Left cardiac atrium (tissue), 4 donors: ENCODE measurements at regions of chr9 and their contacts with region 1.

Region 1: DNA sequence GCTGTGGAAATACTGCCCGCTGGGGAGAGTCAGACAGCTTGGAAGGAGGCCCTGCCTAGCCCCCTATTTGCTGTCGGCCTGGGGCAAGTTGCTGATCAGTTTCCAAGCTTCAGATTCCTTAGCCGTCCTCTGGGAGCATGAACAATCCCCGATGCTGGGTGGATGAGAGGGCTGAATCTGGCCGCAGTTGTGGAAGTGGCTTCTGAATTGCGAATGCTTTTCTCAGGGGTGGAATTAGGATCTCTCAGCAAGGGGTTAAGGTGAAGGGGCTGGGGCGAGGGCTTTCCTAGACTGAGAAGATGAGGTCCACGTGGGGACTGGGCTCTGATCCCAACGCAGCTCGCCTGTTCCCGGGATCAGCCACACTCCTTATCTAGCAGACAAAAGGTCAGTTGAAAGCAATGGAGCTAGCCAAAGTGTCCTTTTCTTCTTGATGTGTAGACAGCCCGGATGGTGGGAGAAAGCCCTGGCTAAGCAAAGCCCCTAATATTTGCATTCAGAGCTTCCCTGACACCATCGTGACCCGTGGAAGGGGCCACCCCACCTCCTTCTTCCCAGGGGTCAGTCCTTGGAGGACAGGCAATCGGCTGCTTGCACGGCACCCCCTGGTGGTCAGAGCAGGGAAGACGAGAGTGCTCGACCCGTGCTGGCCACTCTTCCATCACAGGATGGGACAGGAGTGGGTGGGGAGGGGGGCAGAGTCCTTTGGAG is 54.9 kb downstream of the COL15A1 start:
- DNase-seq: peak; percentile 88
- ATAC-seq: peak; percentile 76 to 80

Region 2: DNA sequence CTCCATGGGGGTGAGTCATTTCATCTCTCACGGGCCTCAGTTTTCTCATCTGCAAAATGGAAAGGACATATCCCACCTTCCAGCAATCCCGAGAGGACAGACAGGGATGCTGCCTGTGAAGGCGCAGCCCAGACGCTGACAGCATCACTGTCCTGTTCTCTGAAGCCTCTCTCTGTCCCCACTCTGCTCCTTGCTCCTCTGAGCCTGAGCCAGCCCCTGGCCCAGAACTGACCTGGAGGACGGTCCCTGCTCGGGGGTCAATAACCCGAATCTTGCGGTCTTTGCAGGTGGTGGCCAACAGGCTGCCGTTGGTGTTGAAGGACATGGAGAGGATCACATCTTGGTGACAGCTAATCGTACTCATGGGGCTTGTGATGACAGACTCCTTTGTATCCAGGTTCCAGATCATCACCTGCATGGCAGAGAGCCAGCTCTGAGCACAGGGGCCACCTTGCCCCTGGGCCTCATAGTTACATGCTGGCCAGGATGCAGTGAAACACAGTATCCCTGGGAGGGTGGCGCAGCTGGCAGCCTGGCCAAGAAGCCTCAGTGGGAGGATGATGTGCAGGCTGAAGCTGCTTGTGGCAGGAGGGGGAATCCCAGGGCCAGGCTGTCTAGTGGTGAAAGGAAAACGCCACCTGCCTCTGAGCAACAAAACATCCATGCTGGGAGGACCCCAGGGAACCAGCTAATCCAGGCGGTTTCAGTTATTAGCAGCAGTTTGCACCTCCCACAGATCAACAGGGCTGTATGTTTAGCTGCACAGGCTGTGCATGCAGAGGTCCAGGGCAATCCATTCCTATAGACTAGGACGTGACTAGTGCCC is 865.6 kb before region 1 on chr9:
- intact Hi-C with region 1: no loop called
- DNase-seq: no peak
- ATAC-seq: no peak

Region 3: GRCh38 chr9:98860871-98861293 is 137.7 kb before region 1 on chr9:
- intact Hi-C with region 1: loop called (anchors 2 to 5 kb)
- DNase-seq: peak; percentile 85
- ATAC-seq: peak; percentile 86 to 88